Dendritic cell treated with granulocyte-macrophage colony-stimulating factor and Interleukin-4, amounts not matched to agents 40 ng/mL and 50 ng/mL, for 4 days (primary cell): ENCODE measurements at regions of chr7 and their contacts with region 1.

Region 1: DNA sequence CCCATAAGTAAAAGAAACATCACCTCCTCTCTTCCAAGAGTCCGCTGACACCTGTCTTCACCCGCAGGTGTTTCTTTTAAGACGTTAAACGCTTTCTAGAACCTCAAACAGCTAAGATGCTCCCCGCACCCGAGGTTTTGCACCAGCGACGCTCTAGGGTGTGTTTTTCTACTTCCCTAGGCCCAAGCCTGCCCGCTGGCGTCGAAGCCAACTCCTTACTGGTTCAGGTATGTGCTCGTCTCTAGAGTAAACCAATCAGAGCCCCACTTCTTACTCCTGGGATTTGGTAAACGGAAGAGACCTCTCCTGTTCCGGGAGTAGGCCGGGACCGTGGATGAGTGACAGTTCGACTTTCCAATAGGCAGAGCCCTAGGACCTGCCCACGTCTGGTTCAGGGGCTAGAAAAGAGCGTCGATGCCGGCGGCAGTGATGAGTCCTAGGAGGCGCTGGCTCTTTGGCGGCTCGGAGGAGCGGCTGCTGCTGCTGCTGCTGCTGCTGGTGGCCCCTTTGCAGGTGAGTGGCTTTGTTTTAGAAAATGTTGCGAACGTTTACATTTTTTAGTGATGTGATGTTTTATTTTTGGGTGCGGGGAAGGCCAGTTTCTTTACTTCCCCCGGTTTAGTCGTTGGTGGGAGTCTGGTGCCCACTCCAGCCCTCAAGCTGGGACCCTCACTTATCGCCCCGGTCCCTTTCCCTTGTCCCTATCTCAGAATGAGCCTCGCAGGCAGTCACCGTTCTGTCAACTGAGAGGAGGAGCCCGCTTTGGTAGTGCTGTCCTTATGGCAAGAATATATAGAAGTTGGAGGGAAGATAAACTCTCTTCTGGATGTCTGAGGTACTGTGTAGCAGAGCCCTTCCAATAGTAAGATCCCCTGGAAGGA is at the start of gene BPGM:
- H3K4me3 Mint-ChIP-seq: no peak within 1 kb of the TSS
- H3K27ac Mint-ChIP-seq: no peak within 1 kb of the TSS
- H3K4me1 Mint-ChIP-seq: peaks cover 25% of the 10 kb centered on the region
- H3K27me3 Mint-ChIP-seq: peaks cover 9% of the 10 kb centered on the region

Region 2: GRCh38 chr7:133252858-133253518 is 1393.7 kb before region 1 on chr7 and contains the start of gene EXOC4:
- intact Hi-C with region 1: loop called (anchors 10 kb)
- H3K4me3 Mint-ChIP-seq: peak within 1 kb of the TSS; percentile 82
- H3K27ac Mint-ChIP-seq: peak within 1 kb of the TSS; percentile 97
- H3K4me1 Mint-ChIP-seq: peaks cover 26% of the 10 kb centered on the region
- H3K27me3 Mint-ChIP-seq: no peaks in the 10 kb centered on the region

Region 3: GRCh38 chr7:134593530-134594392 is 52.9 kb before region 1 on chr7:
- intact Hi-C with region 1: no loop called
- H3K4me3 Mint-ChIP-seq: no peak overlapping the region
- H3K27ac Mint-ChIP-seq: peak overlapping the region; percentile 47
- H3K4me1 Mint-ChIP-seq: peaks cover 7% of the 10 kb centered on the region
- H3K27me3 Mint-ChIP-seq: no peaks in the 10 kb centered on the region

Region 4: DNA sequence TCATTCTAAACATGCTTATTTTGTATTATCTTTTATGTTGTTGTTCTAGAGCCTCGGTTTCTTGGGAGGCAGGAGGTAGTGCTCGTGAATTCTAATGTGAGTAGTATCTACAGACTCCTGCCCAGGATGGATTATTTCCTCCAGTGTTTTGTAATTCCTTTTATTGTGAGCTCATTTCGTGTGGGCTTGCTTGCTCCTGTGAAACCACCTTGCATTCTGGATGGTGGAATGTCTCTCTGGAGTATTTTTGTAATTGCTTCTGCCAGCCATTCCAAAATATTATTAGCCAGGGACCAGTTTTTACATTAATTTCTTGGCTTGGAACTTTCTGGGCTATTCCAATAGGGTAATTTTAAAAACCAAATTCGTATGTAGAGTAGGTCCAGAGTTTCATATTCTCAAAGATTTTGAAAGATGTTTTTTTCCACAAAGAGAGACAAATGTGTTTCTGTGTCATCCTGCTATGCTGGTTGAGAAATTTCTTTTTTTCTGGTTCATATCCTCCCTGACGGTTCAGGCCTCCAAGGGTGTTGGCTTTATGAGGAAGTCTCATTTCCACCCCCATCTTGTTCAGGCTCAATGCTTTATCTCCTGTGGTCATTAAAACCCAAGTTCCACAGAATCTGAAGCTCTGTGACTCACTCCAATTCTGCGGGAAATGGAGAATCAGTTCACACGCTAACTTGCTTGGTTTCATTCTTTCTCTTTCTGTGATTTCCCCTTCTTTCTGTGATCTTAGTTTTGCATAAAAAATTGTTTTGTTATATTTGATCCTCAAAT is 91.1 kb after region 1 on chr7:
- intact Hi-C with region 1: loop called (anchors 5 kb)
- H3K4me3 Mint-ChIP-seq: peak overlapping the region; percentile 39
- H3K27ac Mint-ChIP-seq: peak overlapping the region; percentile 97
- H3K4me1 Mint-ChIP-seq: peaks cover 78% of the 10 kb centered on the region
- H3K27me3 Mint-ChIP-seq: no peaks in the 10 kb centered on the region